ENCODE measurements at regions of chr10 and their contacts with region 1.

Region 1: DNA sequence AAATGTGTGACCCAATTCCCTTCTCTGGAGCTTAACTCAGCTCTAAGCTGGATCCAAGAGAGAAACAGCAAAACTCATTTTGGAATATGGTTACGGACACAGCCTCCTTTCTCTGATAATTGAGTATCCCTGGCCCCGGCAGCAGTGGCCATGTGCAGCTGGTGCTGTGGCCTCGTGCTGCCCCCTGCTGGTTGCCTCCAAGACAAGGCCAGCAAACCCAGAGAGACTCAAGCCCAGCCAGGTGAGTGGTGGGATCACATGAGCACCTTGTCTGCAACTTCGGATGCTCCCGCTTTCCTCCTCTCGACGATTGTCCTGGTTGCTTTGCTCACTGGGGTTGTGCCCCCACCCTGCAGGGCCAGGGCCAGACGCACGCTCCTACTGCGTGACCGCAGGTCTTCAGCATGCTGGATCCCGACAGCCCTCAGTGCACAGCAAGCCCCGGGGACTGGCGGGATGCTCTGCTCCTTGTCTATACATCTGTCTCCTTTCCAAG is 19.4 kb downstream of the SFTPD start:
- DNase-seq: peak; percentile 49 to 95
- H3K4me3 ChIP-seq: no peak overlapping the region
- CTCF ChIP-seq: peak in 1 of 3 donors; percentile 81
- POLR2A ChIP-seq: no peak

Region 2: DNA sequence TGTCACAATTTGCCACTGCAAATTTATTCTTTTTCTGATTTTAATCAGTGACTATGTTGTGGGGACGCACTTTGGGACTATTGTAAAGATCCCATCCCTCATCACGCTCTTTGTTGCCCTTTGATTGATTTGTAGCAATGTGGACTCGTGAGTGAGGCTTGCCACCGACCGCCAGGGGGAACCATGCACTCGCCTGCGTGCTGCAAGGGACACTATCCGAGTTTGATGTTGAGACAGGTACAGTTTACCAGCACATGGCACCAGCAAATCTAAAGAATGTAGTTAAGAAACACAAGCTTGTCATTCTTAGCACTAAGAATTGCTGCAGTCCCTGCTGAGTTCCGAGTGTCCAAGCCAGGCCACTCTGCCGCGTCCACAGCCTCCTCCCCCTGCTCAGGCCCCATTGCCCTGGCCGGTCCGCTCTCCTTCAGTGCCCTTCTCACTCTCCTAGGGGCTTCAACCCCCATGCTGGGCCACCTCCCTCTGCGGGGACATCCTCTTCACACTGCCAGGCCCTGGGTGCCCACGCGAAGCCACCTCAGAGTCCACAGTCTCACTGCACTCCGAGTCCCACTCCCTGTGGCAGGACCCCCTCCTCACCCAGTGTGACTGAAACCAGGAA is 367.2 kb before region 1 on chr10:
- intact Hi-C with region 1: loop called (anchors 10 kb)
- DNase-seq: peak in 1 of 2 donors; percentile 33
- H3K4me3 ChIP-seq: no peak overlapping the region
- CTCF ChIP-seq: no peak
- POLR2A ChIP-seq: no peak